Mammary epithelial cell (primary cell): ENCODE measurements at regions of chr13 and their contacts with region 1.

Region 1: DNA sequence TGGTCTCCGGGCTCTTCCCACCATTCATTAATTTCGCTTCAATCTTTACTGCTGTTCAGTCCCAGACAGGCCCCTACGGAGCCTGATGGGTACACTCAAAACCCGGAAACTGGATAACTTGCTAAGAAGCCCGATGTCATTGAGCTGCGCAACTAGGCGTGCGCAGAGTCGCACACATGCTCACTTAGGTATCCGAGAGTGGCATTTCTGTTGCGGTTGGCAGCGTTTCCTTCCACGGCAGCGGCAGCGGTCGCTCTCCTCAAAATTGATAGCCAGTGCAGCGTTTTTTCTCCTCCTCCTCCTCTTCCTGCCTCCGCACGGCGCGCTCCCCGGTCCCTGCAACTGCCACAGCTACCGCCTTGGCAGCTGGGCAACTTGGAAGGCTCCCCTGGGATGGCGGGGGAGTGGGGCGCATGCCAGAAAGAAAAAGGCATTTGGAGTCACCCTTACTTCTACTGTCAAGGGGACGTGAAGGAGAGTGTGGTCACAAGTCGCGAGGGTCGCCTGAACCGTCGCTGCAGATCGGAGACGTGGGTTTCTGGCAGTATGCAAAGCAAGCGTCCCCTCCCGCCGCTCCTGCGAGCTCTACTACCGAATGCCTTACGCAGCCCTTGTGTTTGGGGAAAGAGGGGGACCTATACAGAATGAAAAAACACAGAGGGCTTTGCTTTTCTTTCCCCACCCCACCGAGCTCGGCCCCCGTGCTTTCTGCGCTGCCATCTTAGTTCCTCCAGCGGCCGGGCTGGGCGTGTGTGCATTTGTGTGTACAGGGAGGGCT is 2.4 kb upstream of the MYCBP2 start:
- DNase-seq: peak; percentile 92
- H3K4me3 ChIP-seq: peak overlapping the region; percentile 66 to 79 (median 77)
- H3K27ac ChIP-seq: peak overlapping the region; percentile 45
- H3K4me1 ChIP-seq: peaks cover 13% of the 10 kb centered on the region
- H3K27me3 ChIP-seq: no peaks in the 10 kb centered on the region
- CTCF ChIP-seq: no peak

Region 2: DNA sequence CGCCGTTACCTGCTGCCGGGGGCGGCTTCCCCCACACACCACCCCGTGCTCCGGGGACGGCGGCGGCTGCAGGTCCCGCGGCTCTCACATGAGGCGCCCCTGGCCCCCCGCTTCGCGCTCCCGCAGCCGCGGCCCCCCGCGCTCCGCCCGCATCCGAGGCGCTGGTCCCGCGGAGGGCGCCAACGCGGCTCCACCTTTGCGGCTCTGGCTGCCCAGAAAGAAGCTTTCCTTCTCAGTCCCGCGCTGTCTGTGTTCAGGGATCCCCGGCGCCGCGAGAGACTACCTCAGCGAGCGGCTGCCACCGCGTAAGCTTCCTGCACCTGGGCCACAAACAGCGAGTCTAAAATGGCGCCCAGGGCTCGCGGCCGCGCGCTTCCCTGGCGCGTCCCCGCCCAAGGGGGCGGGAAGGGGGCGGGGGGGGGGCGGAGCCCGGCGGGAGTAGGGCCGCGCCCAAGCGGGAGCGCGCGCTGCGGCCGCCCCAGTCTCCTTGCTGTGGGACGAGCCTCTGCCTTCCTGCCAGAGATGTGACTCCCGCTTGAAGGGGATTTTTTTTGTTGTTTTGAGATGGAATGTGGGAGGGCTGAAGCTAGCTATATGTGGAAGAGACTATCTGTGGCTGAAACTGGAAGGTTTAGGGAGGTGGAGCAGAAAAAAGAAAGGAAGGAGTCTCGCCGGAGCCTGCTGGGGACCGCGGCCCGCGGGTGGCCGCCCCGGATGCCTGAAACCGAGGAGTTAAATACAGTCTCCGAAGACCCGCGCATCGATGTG is 302.3 kb before region 1 on chr13 and contains the start of gene FBXL3:
- CTCF ChIA-PET with region 1: no interaction called
- dilution Hi-C with region 1: no loop called
- in situ Hi-C with region 1: no loop called
- intact Hi-C with region 1: loop called (anchors 5 kb)
- DNase-seq: peak; percentile 91
- H3K4me3 ChIP-seq: peak within 1 kb of the TSS; percentile 83 to 95 (median 89)
- H3K27ac ChIP-seq: peak within 1 kb of the TSS; percentile 85
- H3K4me1 ChIP-seq: peaks cover 22% of the 10 kb centered on the region
- H3K27me3 ChIP-seq: no peaks in the 10 kb centered on the region
- CTCF ChIP-seq: no peak
- total RNA-seq, gene FBXL3: 31.9 to 44.8 TPM

Region 3: GRCh38 chr13:77099415-77099814 is 229.9 kb before region 1 on chr13:
- CTCF ChIA-PET with region 1: no interaction called
- dilution Hi-C with region 1: no loop called
- in situ Hi-C with region 1: no loop called
- intact Hi-C with region 1: loop called (anchors 10 kb)
- DNase-seq: no peak
- H3K4me3 ChIP-seq: no peak overlapping the region
- H3K27ac ChIP-seq: no peak overlapping the region
- H3K4me1 ChIP-seq: no peaks in the 10 kb centered on the region
- H3K27me3 ChIP-seq: no peaks in the 10 kb centered on the region
- CTCF ChIP-seq: no peak

Region 4: GRCh38 chr13:77176350-77176749 is 153.0 kb before region 1 on chr13:
- CTCF ChIA-PET with region 1: no interaction called
- dilution Hi-C with region 1: no loop called
- in situ Hi-C with region 1: no loop called
- intact Hi-C with region 1: loop called (anchors 5 kb)
- DNase-seq: peak; percentile 84
- H3K4me3 ChIP-seq: no peak overlapping the region
- H3K27ac ChIP-seq: peak overlapping the region; percentile 57
- H3K4me1 ChIP-seq: peaks cover 7% of the 10 kb centered on the region
- H3K27me3 ChIP-seq: no peaks in the 10 kb centered on the region
- CTCF ChIP-seq: no peak

Region 5: DNA sequence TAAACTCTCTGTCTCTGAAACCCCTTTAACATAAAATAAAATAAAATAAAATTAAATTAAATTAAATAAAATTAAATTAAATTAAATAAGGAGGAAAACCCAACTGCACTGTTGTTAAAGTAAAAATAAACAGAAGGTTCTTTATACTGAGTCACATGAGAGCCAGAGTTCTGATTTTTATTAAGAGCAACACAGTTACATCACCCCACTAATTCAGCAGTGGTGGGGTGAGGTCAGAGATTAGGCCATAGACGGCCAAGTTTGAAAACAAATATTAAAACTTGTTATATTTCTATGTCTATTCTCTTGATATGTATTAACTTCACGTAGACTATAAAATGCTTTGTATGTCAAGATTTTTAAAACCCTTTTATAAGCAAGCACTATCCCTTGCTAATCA is 62.0 kb before region 1 on chr13:
- CTCF ChIA-PET with region 1: no interaction called
- dilution Hi-C with region 1: no loop called
- in situ Hi-C with region 1: no loop called
- intact Hi-C with region 1: loop called (anchors 5 kb)
- DNase-seq: no peak
- H3K4me3 ChIP-seq: no peak overlapping the region
- H3K27ac ChIP-seq: no peak overlapping the region
- H3K4me1 ChIP-seq: no peaks in the 10 kb centered on the region
- H3K27me3 ChIP-seq: no peaks in the 10 kb centered on the region
- CTCF ChIP-seq: no peak

Region 6: DNA sequence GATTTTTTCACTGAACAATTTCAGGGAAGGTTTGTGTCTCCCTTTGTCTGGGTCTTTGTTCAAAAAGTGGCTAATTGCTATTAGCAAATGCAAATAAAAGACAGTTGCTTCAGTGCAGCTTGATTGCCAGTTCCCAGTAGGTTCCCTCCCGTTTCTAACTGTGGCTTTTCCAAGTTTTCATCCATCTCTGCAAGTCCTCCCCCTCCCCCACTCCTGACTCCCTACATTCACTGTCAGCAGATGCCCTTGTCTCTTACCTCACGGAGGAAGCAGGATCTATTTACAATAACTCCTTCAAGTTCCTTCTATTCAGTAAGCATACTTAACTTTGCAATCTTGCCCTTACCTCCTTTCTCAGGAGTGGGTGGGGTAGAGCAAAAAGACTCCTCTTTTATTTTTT is 150.7 kb after region 1 on chr13:
- CTCF ChIA-PET with region 1: interaction called, 18 read pairs
- dilution Hi-C with region 1: no loop called
- in situ Hi-C with region 1: no loop called
- intact Hi-C with region 1: loop called (anchors 1 kb)
- DNase-seq: no peak
- H3K4me3 ChIP-seq: no peak overlapping the region
- H3K27ac ChIP-seq: no peak overlapping the region
- H3K4me1 ChIP-seq: peaks cover 5% of the 10 kb centered on the region
- H3K27me3 ChIP-seq: no peaks in the 10 kb centered on the region
- CTCF ChIP-seq: no peak